Ovary (tissue), 10 donors: ENCODE measurements at regions of chr1 and their contacts with region 1.

Region 1: GRCh38 chr1:211654838-211655787 is 20.3 kb downstream of the NEK2 start:
- DNase-seq: peak; percentile 85 to 93 (median 91)
- H3K4me3 ChIP-seq: no peak overlapping the region
- H3K27ac ChIP-seq: no peak overlapping the region
- H3K4me1 ChIP-seq: no peaks in the 10 kb centered on the region
- H3K27me3 ChIP-seq: no peaks in the 10 kb centered on the region
- CTCF ChIP-seq: peak; percentile 82 to 90 (median 84)
- EP300 ChIP-seq: no peak
- POLR2A ChIP-seq: no peak

Region 2: GRCh38 chr1:211082824-211083223 is 572.3 kb before region 1 on chr1:
- intact Hi-C with region 1: no loop called
- DNase-seq: no peak
- H3K4me3 ChIP-seq: no peak overlapping the region
- H3K27ac ChIP-seq: no peak overlapping the region
- H3K4me1 ChIP-seq: no peaks in the 10 kb centered on the region
- H3K27me3 ChIP-seq: no peaks in the 10 kb centered on the region
- CTCF ChIP-seq: no peak
- EP300 ChIP-seq: no peak
- POLR2A ChIP-seq: no peak

Region 3: DNA sequence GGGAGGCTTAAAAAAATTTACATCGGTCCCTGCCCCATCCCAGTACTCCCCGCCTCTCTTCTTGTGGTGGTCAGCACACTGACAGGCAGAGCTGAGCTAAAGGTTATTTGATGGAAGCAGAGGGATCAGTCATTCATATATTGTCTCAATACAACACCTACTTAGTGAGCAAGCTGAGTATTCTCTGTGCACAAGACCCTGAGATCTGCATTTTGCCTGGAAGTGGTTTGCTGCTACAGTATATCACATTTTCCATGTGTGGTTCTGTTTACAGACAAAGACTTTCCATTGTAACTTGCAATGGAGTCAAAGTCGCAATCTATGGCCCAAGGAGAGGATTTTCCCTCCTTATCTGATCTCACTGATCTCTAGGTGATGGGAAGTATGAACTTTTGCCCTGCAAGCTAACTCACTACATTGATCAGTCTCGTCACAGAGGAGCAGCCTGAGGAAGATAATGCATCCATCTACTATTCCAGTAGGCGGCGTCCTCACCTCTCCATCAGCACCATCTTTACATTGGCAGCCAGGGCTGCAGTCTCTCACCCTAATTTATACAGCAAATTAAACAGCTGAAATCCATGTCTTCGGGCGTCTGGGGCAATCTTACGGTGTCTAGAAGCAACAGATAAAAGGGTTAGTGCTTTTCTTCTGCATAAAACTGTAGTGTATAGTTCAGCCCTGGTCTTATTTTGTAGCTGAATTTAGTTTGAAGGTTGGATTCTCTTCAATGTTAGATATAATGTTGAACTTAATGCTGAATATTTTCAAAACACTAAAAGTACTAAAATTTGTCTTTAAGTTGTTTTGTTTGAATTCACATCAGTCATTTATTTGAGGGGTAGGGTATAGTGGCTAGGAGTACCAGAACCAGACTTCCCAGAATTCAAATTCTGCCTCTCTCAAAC is 331.7 kb before region 1 on chr1:
- intact Hi-C with region 1: loop called in 1 of 4 experiments (anchors 10 kb)
- DNase-seq: no peak
- H3K4me3 ChIP-seq: no peak overlapping the region
- H3K27ac ChIP-seq: no peak overlapping the region
- H3K4me1 ChIP-seq: peaks cover 3% of the 10 kb centered on the region
- H3K27me3 ChIP-seq: no peaks in the 10 kb centered on the region
- CTCF ChIP-seq: peak in 2 of 3 donors; percentile 32 to 38
- EP300 ChIP-seq: no peak
- POLR2A ChIP-seq: no peak

Region 4: DNA sequence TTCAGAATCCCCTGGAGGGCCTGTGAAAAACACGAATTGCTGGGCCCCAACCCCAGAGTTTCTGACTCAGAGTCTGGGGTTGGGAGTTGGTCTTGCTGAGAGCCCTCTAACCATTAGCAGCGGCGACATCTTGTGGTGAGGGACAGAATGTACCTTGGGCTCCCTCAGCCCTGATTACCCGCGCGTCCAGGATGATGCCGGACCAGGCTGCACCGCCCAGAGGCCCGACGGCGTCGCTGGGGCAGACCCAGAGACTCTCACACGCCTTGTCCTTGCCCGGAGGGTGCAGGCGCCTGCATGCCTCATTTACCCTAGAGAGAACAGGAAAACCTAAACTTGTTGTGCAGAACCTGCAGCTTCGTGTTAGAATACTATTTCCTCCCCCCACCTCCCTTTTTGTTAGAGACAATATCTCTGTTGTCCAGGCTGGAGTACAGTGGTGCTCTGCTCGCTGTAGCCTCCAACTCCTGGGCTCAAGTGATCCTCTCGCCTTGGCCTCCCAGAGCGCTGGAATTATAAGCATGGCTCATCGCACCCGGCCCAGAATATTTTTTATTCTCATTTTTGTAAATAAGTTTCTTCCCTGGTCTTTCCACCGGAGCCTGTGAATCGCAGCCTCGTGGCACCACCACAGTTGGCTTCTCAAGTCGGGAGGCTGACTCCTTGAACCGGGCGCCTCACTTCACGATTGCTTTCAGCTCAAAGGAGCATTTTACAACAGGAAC is 140.9 kb before region 1 on chr1:
- intact Hi-C with region 1: loop called in 2 of 4 experiments (anchors 2 to 5 kb)
- DNase-seq: peak; percentile 73 to 82 (median 76)
- H3K4me3 ChIP-seq: no peak overlapping the region
- H3K27ac ChIP-seq: no peak overlapping the region
- H3K4me1 ChIP-seq: peaks cover 7% of the 10 kb centered on the region
- H3K27me3 ChIP-seq: no peaks in the 10 kb centered on the region
- CTCF ChIP-seq: peak in 2 of 3 donors; percentile 37 to 59
- EP300 ChIP-seq: no peak
- POLR2A ChIP-seq: no peak

Region 5: GRCh38 chr1:211578640-211579433 is 76.3 kb before region 1 on chr1 and contains the start of gene SLC30A1:
- intact Hi-C with region 1: loop called in 3 of 4 experiments (anchors 2 to 5 kb)
- DNase-seq: peak; percentile 100
- H3K4me3 ChIP-seq: peak within 1 kb of the TSS; percentile 71
- H3K27ac ChIP-seq: peak within 1 kb of the TSS; percentile 82 to 89
- H3K4me1 ChIP-seq: peaks cover 2% of the 10 kb centered on the region
- H3K27me3 ChIP-seq: no peaks in the 10 kb centered on the region
- CTCF ChIP-seq: peak in 1 of 3 donors; percentile 6
- EP300 ChIP-seq: peak; percentile 33
- POLR2A ChIP-seq: peak; percentile 79
- total RNA-seq, gene SLC30A1: 11.9 to 23.4 (median 18.9) TPM